WTC11 (cell line): ENCODE measurements at regions of chr5 and their contacts with region 1.

Region 1: DNA sequence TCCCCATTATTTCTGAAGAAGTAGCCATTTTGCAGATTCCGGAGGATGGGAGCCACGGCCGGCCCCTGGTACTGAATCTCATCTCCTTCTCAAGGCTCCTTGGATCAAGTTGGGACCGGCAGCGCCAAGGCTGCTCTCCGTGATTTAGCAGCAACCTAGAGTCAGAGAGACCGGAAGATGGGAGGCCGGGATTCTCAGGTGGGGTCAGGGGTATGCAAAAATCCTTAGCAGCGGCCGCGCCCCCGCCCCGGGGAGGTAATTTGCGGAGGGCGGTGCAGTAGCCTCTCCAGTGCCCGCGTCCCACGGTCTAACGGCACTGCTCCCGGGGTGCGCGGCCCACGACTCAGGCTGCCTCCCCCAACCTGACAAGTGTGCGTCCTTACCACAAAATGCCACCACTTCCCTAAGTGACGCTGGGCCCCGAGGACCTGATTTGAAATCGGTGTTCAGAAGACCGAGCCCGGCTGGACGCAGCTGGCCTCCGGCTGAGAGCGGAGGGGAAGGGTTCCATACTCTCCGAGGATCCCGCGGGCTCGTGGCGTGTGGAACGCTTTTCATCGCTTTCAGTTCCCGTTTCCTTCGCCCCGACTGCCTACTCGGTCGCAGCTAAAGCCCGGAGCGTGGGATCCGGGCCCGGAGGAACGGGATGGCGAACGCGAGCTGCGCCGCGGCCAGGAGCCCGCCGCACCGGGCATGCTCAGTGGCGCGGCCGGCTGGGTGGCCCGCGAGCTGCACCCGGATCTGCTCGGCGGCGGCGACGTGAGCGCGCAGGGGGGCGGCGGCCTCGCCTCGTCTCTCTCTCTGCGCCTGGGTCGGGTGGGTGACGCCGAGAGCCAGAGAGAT is at the start of gene SCAMP1:
- DNase-seq: peak; percentile 86
- ATAC-seq: peak; percentile 84
- H3K4me3 Mint-ChIP-seq: peak within 1 kb of the TSS; percentile 85
- H3K27ac Mint-ChIP-seq: peak within 1 kb of the TSS; percentile 82
- H3K4me1 Mint-ChIP-seq: peaks cover 29% of the 10 kb centered on the region
- H3K27me3 Mint-ChIP-seq: no peaks in the 10 kb centered on the region
- CTCF ChIP-seq: no peak
- total RNA-seq, gene SCAMP1: 38.3 to 43.8 TPM (median 39.2 TPM) in 3 replicates

Region 2: GRCh38 chr5:78294248-78295034 is 65.6 kb before region 1 on chr5 and contains the start of gene AP3B1:
- CTCF ChIA-PET with region 1: interaction called, 22 read pairs
- POLR2A ChIA-PET with region 1: interaction called, 12 read pairs
- DNase-seq: peak; percentile 99
- ATAC-seq: peak; percentile 90
- H3K4me3 Mint-ChIP-seq: peak within 1 kb of the TSS; percentile 93
- H3K27ac Mint-ChIP-seq: peak within 1 kb of the TSS; percentile 95
- H3K4me1 Mint-ChIP-seq: peaks cover 29% of the 10 kb centered on the region
- H3K27me3 Mint-ChIP-seq: no peaks in the 10 kb centered on the region; the same call in 1 of the 2 replicates
- CTCF ChIP-seq: no peak
- total RNA-seq, gene AP3B1: 42.8 to 50.3 TPM (median 46.3 TPM) in 3 replicates

Region 3: GRCh38 chr5:78320401-78320800 is 39.7 kb before region 1 on chr5:
- CTCF ChIA-PET with region 1: interaction called, 17 read pairs
- POLR2A ChIA-PET with region 1: no interaction called
- DNase-seq: no peak
- ATAC-seq: peak; percentile 20; the same call in 1 of the 2 replicates
- H3K4me3 Mint-ChIP-seq: no peak overlapping the region
- H3K27ac Mint-ChIP-seq: no peak overlapping the region
- H3K4me1 Mint-ChIP-seq: peaks cover 15% of the 10 kb centered on the region
- H3K27me3 Mint-ChIP-seq: peaks cover 2% of the 10 kb centered on the region; the same call in 1 of the 2 replicates
- CTCF ChIP-seq: 0 out of 2 replicates have a peak, but pooled peaks have one; percentile 15

Region 4: DNA sequence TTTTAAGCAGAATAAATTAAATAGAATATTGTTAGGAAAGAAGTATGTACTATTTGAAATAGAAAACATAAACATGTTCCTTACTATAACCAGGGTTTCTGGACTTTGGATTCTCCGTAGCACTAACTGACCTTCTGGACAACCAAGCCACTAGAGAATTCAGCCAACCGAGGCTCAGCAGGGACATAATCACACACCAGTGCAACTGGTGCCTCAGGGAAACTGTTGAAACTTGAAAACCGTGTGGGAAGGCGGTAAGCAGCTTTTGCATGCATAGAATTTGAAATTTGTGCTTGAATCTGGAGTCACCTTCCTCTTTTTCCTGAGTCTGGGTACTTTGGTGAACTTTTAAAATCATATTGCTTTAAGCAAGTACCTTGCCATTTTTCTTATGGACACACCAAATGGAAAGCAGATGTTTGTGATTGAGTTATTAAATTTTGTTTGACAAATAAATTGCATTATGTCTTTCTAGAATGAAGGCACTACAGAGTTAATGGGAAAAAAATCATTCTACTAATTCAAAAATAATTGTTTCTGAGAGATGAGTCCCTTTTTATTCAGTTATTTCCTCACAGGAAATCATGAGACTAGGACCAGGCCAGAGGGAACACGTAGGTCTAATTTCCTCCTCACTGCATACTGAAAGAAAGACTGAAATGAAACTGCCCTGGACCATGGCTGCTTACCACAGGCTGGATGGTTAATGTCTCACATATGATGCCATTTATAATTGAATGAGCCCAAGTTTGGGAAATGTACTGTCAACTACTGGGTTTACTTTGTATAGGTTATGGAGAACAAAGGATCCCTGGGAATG is 20.2 kb before region 1 on chr5:
- CTCF ChIA-PET with region 1: no interaction called
- POLR2A ChIA-PET with region 1: no interaction called
- DNase-seq: no peak
- ATAC-seq: no peak
- H3K4me3 Mint-ChIP-seq: no peak overlapping the region
- H3K27ac Mint-ChIP-seq: no peak overlapping the region
- H3K4me1 Mint-ChIP-seq: peaks cover 9% of the 10 kb centered on the region
- H3K27me3 Mint-ChIP-seq: peaks cover 95% of the 10 kb centered on the region
- CTCF ChIP-seq: no peak

Region 5: DNA sequence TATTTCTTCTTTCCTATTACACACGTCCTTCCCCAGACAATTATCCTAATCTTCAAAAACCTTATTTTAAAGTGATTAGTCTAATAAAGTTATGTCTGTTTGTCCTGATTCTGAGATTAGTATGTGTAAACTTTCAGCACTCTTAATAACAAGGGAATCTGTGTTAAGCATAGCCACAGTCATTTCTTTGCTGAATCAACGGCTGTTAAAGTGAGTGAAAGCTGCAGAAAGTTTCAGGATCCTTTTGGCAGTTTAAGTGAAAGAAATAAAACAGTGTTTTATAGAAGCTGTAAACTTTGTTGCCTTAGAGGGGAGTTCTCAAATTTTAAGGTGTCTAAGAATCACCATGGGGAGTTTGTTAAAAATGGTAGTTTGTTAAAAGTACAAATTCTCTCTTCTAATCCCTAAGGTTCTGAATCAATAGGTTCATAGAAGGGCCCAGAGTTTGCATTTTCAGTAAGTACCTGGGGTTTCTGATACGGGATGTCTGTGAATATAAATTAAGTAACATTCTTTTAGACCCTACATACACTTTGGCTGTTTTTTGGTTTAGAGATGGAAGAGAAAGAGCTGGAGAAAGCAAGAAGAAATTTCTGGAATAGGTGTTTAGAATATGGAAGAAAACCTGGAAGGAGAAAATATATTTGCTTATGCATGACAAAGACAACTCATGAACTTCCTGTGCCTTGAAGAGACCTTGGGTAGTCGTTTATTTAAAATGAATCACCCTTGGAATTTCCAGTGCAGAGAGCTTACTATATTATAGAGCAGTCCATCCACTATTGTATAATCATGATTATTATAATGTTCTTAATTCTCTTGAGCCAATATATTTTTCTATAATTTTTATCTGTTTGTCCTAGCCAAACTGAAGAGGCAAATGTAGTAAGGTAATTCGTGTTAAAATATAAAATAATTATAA is 46.0 kb after region 1 on chr5:
- CTCF ChIA-PET with region 1: no interaction called
- POLR2A ChIA-PET with region 1: no interaction called
- DNase-seq: no peak
- ATAC-seq: no peak
- H3K4me3 Mint-ChIP-seq: no peak overlapping the region
- H3K27ac Mint-ChIP-seq: no peak overlapping the region
- H3K4me1 Mint-ChIP-seq: peaks cover 24% of the 10 kb centered on the region
- H3K27me3 Mint-ChIP-seq: no peaks in the 10 kb centered on the region
- CTCF ChIP-seq: no peak